Activated CD4-positive, alpha-beta memory T cell treated with anti-CD3 and anti-CD28 coated beads for 36 hours (primary cell): ENCODE measurements at regions of chr4 and their contacts with region 1.

Region 1: DNA sequence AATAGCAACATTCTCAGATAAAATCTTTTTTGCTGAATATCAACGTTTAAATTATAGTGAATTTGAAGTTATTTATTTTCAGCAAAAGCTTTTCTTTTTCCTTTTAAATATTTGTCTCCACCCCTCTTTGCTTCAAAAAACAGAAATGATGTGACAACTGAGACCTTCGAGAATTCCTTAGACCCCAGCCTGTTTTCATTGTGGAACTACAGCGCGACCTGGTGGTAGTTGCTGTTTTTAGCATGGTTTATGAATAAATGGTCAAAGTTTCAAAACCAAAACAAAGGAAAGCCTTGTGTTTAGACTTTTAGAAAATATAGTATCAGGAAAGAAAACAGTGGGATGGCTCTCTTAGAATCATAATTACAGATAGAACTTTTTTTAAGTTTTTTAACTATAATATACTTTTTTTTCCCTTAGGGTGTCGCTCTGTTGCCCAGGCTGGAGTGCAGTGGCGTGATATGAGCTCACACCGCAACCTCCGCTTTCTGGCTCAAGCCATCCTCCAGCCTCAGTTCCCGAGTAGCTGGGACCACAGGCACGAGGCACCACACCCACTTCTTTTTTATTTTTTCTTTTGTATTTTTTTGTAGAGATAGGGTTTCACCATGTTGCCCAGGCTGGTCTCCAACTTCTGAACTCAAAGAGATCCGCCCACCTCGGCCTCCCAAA is 26.8 kb upstream of the TMEM184C start:
- DNase-seq: peak; percentile 60
- H3K4me3 Mint-ChIP-seq: no peak overlapping the region
- H3K27ac Mint-ChIP-seq: no peak overlapping the region
- H3K4me1 Mint-ChIP-seq: peaks cover 2% of the 10 kb centered on the region
- H3K27me3 Mint-ChIP-seq: peaks cover 5% of the 10 kb centered on the region

Region 2: GRCh38 chr4:146342600-146343192 is 1247.7 kb before region 1 on chr4:
- CTCF ChIA-PET with region 1: no interaction called
- POLR2A ChIA-PET with region 1: no interaction called
- intact Hi-C with region 1: loop called (anchors 5 kb)
- DNase-seq: peak; percentile 27
- H3K4me3 Mint-ChIP-seq: no peak overlapping the region
- H3K27ac Mint-ChIP-seq: no peak overlapping the region
- H3K4me1 Mint-ChIP-seq: peaks cover 3% of the 10 kb centered on the region
- H3K27me3 Mint-ChIP-seq: no peaks in the 10 kb centered on the region

Region 3: DNA sequence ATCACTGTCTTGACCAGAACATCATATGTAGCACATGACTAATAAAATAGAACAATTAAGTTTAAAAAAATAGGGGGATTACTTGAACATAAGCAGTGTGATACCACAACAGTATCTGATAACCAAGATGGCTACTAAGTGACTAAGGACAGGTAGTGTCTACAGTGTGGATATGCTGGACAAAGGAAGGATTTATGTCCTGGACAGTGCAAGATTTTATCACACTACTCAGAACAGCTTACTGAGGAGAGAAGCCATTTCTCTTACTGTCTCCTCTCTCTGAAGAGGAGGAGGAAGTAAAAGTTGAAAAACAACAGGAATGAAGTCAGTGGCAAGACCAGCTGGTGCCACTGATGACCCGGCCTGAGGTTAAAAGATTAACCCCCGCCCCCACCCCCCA is 1064.6 kb before region 1 on chr4:
- CTCF ChIA-PET with region 1: no interaction called
- POLR2A ChIA-PET with region 1: no interaction called
- intact Hi-C with region 1: no loop called
- DNase-seq: no peak
- H3K4me3 Mint-ChIP-seq: no peak overlapping the region
- H3K27ac Mint-ChIP-seq: no peak overlapping the region
- H3K4me1 Mint-ChIP-seq: peaks cover 11% of the 10 kb centered on the region
- H3K27me3 Mint-ChIP-seq: no peaks in the 10 kb centered on the region

Region 4: DNA sequence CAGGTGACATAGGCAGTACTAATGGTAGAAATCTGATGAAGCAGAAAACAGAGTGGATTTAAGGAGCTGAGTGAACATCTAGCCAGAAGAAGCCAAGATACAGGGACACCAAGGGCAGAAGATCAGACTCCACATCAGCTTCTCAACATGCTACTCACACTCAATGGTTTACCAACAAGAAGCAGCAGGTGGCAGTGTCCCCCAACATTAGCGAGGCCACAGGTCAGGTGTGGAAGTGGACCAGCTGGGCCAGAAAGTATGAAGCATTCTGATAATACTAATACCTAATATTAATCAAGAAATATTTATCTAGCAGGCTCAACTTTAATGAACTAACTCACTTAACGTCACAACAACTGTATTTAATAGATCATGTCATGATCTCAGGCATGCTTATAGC is 571.3 kb before region 1 on chr4:
- CTCF ChIA-PET with region 1: no interaction called
- POLR2A ChIA-PET with region 1: no interaction called
- intact Hi-C with region 1: loop called (anchors 5 kb)
- DNase-seq: peak; percentile 66
- H3K4me3 Mint-ChIP-seq: no peak overlapping the region
- H3K27ac Mint-ChIP-seq: no peak overlapping the region
- H3K4me1 Mint-ChIP-seq: no peaks in the 10 kb centered on the region
- H3K27me3 Mint-ChIP-seq: no peaks in the 10 kb centered on the region

Region 5: GRCh38 chr4:147160908-147161513 is 429.4 kb before region 1 on chr4:
- CTCF ChIA-PET with region 1: interaction called, 22 read pairs
- POLR2A ChIA-PET with region 1: no interaction called
- intact Hi-C with region 1: loop called (anchors 1 kb)
- DNase-seq: peak; percentile 11
- H3K4me3 Mint-ChIP-seq: no peak overlapping the region
- H3K27ac Mint-ChIP-seq: no peak overlapping the region
- H3K4me1 Mint-ChIP-seq: peaks cover 2% of the 10 kb centered on the region
- H3K27me3 Mint-ChIP-seq: peaks cover 15% of the 10 kb centered on the region

Region 6: DNA sequence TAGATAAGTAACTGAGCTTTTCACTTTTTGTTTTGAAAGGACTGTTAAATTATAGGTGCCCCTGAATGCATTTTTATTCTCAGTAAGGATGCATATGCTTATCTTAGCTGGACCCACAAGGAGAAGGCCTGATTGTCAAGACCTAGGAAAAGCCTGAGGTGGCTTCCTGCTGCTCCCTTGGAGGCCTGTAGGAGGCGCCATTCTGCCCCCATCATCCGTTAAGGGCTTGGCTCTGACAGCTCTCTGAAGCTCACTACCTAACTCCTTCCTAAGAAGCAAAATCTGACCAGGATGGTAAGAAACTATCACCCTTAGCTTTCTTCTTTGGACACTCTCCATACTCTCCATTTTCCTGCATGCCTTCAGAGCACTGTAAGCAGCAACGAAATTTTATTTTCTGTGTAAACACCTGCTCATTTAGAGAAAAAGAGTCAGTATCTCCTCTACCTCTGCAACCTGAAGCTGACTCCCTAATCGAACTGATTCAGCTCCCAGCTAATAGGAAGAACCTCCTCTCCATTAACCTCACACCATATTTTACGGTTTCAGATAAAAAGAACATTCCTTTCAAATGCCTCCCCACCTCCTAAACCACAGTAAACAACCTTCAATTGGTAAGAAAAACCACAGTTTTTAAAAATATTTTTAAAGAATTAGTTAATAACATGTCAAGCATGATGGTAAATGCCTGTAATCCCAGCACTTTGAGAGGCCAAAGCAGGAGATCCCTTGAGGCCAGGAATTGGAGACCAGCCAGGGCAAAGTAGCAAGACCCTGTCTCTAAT is 182.9 kb before region 1 on chr4:
- CTCF ChIA-PET with region 1: no interaction called
- POLR2A ChIA-PET with region 1: no interaction called
- intact Hi-C with region 1: no loop called
- DNase-seq: peak; percentile 8
- H3K4me3 Mint-ChIP-seq: no peak overlapping the region
- H3K27ac Mint-ChIP-seq: no peak overlapping the region
- H3K4me1 Mint-ChIP-seq: no peaks in the 10 kb centered on the region
- H3K27me3 Mint-ChIP-seq: no peaks in the 10 kb centered on the region

Region 7: GRCh38 chr4:147518846-147519767 is 71.3 kb before region 1 on chr4:
- CTCF ChIA-PET with region 1: interaction called, 59 read pairs
- POLR2A ChIA-PET with region 1: no interaction called
- intact Hi-C with region 1: loop called (anchors 1 kb)
- DNase-seq: peak; percentile 57
- H3K4me3 Mint-ChIP-seq: no peak overlapping the region
- H3K27ac Mint-ChIP-seq: no peak overlapping the region
- H3K4me1 Mint-ChIP-seq: no peaks in the 10 kb centered on the region
- H3K27me3 Mint-ChIP-seq: peaks cover 6% of the 10 kb centered on the region